A549 (cell line): ENCODE measurements at regions of chr2 and their contacts with region 1.

Region 1: DNA sequence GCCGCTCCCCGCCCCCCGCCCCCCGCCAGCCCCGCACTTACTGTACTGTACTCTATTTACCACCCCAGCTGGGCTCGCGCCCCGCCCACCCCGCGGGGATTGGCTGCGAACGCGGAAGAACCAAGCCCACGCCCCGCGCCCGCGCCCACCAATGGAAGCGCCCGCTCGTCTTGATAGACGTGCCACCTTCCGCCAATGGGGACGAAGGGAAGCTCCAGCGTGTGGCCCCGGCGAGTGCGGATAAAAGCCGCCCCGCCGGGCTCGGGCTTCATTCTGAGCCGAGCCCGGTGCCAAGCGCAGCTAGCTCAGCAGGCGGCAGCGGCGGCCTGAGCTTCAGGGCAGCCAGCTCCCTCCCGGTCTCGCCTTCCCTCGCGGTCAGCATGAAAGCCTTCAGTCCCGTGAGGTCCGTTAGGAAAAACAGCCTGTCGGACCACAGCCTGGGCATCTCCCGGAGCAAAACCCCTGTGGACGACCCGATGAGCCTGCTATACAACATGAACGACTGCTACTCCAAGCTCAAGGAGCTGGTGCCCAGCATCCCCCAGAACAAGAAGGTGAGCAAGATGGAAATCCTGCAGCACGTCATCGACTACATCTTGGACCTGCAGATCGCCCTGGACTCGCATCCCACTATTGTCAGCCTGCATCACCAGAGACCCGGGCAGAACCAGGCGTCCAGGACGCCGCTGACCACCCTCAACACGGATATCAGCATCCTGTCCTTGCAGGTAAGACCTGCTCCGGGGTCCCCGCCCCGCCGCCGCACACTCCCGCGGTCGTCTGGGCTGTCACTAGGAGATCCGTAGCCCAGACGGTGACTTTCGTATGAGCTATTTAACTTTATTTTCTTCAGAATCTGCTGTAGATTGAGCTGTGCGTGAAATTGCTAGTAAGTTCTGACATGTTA is at the start of gene ID2:
- DNase-seq: peak; percentile 98 to 99
- ATAC-seq: peak; percentile 30 to 69
- H3K4me3 ChIP-seq: peak within 1 kb of the TSS; percentile 87
- H3K27ac ChIP-seq: peak within 1 kb of the TSS; percentile 97 to 99
- H3K4me1 ChIP-seq: peaks cover 11% of the 10 kb centered on the region
- CTCF ChIP-seq: no peak
- EP300 ChIP-seq: no peak
- POLR2A ChIP-seq: peak; percentile 100
- RAD21 ChIP-seq: peak; percentile 30 to 35; a peak in 2 of 5 replicates
- polyA plus RNA-seq, gene ID2: 177 and 228 TPM in 2 replicates

Region 2: DNA sequence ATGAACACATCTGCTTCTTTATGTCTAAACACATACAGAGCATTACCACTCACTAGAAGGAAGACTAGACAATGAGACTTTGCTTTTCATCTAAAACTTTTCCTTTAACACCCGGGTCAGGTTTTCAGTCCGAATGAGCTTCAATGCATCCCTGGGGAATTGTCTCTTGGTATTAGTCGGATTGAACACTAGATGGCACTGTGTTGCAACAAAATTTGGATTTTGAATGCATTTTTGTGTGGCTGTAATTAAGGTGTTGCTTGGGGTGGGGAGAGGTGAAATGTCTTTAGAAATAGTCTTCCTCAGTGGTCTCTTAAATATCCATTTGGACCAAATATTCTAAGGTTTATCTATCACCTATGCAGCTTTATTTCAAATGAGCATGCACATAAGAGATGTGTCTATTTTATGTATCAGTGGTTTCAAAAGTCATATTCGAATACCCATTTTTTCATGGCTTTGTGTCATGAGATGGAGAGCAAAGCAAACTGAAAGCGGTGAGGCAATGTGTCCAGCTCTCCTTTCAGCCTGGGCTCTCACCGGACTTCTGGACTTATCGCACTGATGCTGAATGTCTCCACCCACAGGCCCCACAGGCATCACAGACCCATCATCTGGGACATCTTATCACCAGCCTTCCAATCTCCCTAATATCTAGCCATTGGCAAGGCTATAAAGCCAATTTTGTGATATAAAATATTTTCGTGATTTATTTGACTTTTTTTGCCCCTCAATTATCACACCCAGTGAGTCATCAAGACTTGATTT is 1254.6 kb before region 1 on chr2:
- CTCF ChIA-PET with region 1: interaction called, 56 read pairs
- POLR2A ChIA-PET with region 1: interaction called, 23 read pairs
- DNase-seq: peak; percentile 41 to 60
- ATAC-seq: peak in 1 of 2 experiments; percentile 57; a peak in 4 of 6 replicates
- H3K4me3 ChIP-seq: no peak overlapping the region
- H3K27ac ChIP-seq: no peak overlapping the region
- H3K4me1 ChIP-seq: no peaks in the 10 kb centered on the region
- CTCF ChIP-seq: peak; percentile 87
- EP300 ChIP-seq: no peak
- POLR2A ChIP-seq: no peak
- RAD21 ChIP-seq: peak; percentile 90 to 94

Region 3: GRCh38 chr2:8628230-8629209 is 53.5 kb before region 1 on chr2:
- CTCF ChIA-PET with region 1: interaction called, 13 read pairs
- POLR2A ChIA-PET with region 1: interaction called, 40 read pairs
- DNase-seq: peak; percentile 72 to 75
- ATAC-seq: peak; percentile 61 to 62
- H3K4me3 ChIP-seq: 0 out of 3 replicates have a peak overlapping the region, but pooled peaks have one; percentile 3
- H3K27ac ChIP-seq: peak overlapping the region; percentile 89 to 94
- H3K4me1 ChIP-seq: peaks cover 92% of the 10 kb centered on the region
- CTCF ChIP-seq: peak; percentile 49
- EP300 ChIP-seq: no peak
- POLR2A ChIP-seq: no peak
- RAD21 ChIP-seq: peak; percentile 20 to 61

Region 4: GRCh38 chr2:8642366-8643071 is 39.5 kb before region 1 on chr2:
- CTCF ChIA-PET with region 1: interaction called, 16 read pairs
- POLR2A ChIA-PET with region 1: interaction called, 13 read pairs
- DNase-seq: no peak
- ATAC-seq: no peak; a peak in 1 of 6 replicates
- H3K4me3 ChIP-seq: no peak overlapping the region
- H3K27ac ChIP-seq: peak overlapping the region; percentile 1 to 54; a peak in 2 of 6 replicates
- H3K4me1 ChIP-seq: 0 out of 3 replicates have a peak, but pooled peaks cover 10% of the 10 kb centered on the region
- CTCF ChIP-seq: no peak
- EP300 ChIP-seq: no peak
- POLR2A ChIP-seq: no peak
- RAD21 ChIP-seq: no peak

Region 5: DNA sequence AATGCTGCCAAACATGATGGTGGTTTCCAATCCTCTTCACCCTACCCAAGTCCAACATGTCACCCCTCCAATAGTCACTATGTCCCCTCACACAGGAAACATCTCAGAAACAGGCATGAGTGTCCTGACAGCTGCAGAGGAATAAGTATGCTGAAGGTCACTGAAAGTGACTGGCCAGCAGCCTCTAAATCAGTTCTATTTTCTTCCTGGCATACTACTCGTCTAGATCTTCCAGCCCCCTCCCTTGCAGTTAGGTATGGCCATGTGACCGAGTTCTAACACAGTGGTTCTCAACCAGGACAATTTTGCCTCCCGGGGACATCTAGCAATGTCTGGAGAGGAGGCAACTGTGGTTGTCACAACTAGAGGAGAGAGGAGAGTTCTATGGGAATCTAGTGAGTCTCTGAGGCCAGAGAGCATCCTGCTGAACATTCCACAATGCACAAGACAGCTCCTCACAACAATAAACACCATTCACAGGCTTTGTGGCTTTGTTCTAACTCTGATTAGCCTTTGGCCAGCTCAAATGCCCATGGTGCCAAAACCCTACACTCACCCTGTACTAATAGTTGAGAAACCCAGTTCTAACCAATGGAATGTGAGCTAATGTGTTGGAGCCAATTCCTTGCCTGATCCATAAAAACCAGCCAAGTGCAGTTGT is 12.8 kb before region 1 on chr2:
- CTCF ChIA-PET with region 1: interaction called, 15 read pairs
- POLR2A ChIA-PET with region 1: interaction called, 12 read pairs
- DNase-seq: no peak
- ATAC-seq: no peak
- H3K4me3 ChIP-seq: no peak overlapping the region
- H3K27ac ChIP-seq: peak overlapping the region in 1 of 2 experiments; percentile 35; a peak in 1 of 6 replicates
- H3K4me1 ChIP-seq: no peaks in the 10 kb centered on the region
- CTCF ChIP-seq: no peak
- EP300 ChIP-seq: no peak
- POLR2A ChIP-seq: no peak
- RAD21 ChIP-seq: no peak